Heart left ventricle (tissue), 16 donors: ENCODE measurements at regions of chr17 and their contacts with region 1.

Region 1: GRCh38 chr17:43388359-43389045 is 10.3 kb upstream of the ARL4D start:
- DNase-seq: peak; percentile 90 to 95 (median 94)
- ATAC-seq: peak; percentile 89 to 93 (median 93)
- H3K4me3 ChIP-seq: peak overlapping the region; percentile 38 to 75 (median 66)
- H3K27ac ChIP-seq: peak overlapping the region; percentile 90 to 100 (median 98)
- H3K4me1 ChIP-seq: peaks cover 0 to 19% (median 10%) of the 10 kb centered on the region in 12 donors
- H3K27me3 ChIP-seq: no peaks in the 10 kb centered on the region
- CTCF ChIP-seq: no peak
- POLR2A ChIP-seq: peak; percentile 80 to 97

Region 2: GRCh38 chr17:43360739-43361505 is 27.6 kb before region 1 on chr17:
- intact Hi-C with region 1: loop called in 3 of 10 experiments (anchors 2 kb)
- DNase-seq: peak; percentile 90 to 93 (median 90)
- ATAC-seq: peak; percentile 87 to 93 (median 90)
- H3K4me3 ChIP-seq: peak overlapping the region; percentile 24 to 73 (median 59)
- H3K27ac ChIP-seq: peak overlapping the region; percentile 90 to 99 (median 96)
- H3K4me1 ChIP-seq: peaks cover 0 to 18% (median 10%) of the 10 kb centered on the region in 12 donors
- H3K27me3 ChIP-seq: no peaks in the 10 kb centered on the region
- CTCF ChIP-seq: no peak
- POLR2A ChIP-seq: peak; percentile 10 to 97

Region 3: DNA sequence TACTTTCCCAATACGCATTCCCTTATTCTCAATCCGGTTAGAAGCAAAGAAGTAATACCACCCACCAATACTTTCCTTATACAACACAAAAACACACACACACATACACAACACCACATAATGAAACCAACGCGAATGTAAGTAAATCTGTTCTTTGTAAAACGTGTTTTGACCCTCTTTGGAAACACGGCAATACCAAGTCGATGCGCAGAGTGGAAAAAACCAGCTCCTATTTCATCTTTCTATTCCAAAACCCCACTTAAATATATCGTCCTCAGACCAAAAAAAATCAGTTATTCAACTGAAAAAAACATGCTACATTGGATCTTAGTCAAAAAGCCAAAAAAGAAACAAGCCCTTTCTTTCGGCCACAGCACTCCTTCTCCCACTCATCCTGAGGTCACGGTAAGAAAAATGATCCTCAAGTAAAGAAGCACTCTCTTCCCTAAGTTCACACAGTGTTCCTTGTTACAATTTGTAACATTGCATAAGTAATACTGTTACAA is 20.7 kb before region 1 on chr17:
- intact Hi-C with region 1: loop called in 8 of 10 experiments (anchors 1 to 2 kb)
- DNase-seq: no peak
- ATAC-seq: peak; percentile 2 to 20 (median 16)
- H3K4me3 ChIP-seq: peak overlapping the region in 11 of 12 donors; percentile 40 to 70 (median 61)
- H3K27ac ChIP-seq: peak overlapping the region; percentile 95 to 100 (median 99)
- H3K4me1 ChIP-seq: peaks cover 0 to 43% (median 28%) of the 10 kb centered on the region in 12 donors
- H3K27me3 ChIP-seq: no peaks in the 10 kb centered on the region
- CTCF ChIP-seq: no peak
- POLR2A ChIP-seq: no peak

Region 4: GRCh38 chr17:43467981-43468581 is 79.6 kb after region 1 on chr17:
- intact Hi-C with region 1: no loop called
- DNase-seq: no peak
- ATAC-seq: peak in 1 of 4 donors; percentile 44
- H3K4me3 ChIP-seq: no peak overlapping the region
- H3K27ac ChIP-seq: no peak overlapping the region
- H3K4me1 ChIP-seq: peaks cover 0 to 17% (median 3%) of the 10 kb centered on the region in 12 donors
- H3K27me3 ChIP-seq: no peaks in the 10 kb centered on the region
- CTCF ChIP-seq: no peak
- POLR2A ChIP-seq: no peak

Region 5: DNA sequence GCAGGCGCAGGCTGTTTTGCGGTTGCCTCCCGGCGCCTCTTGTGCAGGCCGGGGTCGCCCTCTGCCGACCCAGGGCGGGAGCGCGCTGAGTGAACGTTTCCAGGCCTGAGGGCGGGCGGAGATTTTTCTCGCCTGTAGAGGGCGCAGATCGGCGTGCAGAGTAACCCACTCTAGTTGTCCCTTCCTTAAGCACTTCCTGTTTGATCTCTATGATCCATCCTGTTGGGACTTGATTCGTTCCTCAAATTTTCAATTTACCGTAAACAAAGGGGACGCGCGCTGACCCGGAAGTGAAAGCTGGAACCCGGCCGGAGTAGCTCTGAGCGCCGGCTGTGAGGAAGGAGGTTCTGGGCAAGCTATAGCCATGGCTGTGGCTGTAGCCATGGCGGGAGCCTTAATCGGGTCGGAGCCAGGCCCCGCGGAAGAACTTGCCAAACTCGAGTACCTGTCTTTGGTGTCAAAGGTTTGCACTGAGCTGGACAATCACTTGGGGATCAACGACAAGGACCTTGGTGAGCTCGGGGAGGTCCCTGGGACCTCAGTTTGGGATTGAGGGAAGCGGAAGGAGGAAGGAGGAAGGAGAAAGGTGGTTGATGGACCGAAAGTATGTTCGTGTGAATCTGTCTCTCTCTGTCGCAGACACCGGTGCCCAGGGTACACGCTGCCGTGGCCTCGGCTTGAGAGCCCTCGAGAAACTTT is 95.3 kb after region 1 on chr17 and contains the start of gene DHX8:
- intact Hi-C with region 1: loop called in 1 of 10 experiments (anchors 1 kb)
- DNase-seq: peak; percentile 97 to 99 (median 97)
- ATAC-seq: peak; percentile 99
- H3K4me3 ChIP-seq: peak within 1 kb of the TSS; percentile 58 to 91 (median 77)
- H3K27ac ChIP-seq: peak within 1 kb of the TSS; percentile 54 to 93 (median 82)
- H3K4me1 ChIP-seq: peaks cover 0 to 41% (median 28%) of the 10 kb centered on the region in 12 donors
- H3K27me3 ChIP-seq: no peaks in the 10 kb centered on the region
- CTCF ChIP-seq: peak; percentile 100
- POLR2A ChIP-seq: peak in 1 of 2 donors; percentile 80
- total RNA-seq, gene DHX8: 22.7 to 41.0 (median 28.1) TPM